Right ventricle myocardium superior (tissue), 1 donor: ENCODE measurements at regions of chr5 and their contacts with region 1.

Region 1: DNA sequence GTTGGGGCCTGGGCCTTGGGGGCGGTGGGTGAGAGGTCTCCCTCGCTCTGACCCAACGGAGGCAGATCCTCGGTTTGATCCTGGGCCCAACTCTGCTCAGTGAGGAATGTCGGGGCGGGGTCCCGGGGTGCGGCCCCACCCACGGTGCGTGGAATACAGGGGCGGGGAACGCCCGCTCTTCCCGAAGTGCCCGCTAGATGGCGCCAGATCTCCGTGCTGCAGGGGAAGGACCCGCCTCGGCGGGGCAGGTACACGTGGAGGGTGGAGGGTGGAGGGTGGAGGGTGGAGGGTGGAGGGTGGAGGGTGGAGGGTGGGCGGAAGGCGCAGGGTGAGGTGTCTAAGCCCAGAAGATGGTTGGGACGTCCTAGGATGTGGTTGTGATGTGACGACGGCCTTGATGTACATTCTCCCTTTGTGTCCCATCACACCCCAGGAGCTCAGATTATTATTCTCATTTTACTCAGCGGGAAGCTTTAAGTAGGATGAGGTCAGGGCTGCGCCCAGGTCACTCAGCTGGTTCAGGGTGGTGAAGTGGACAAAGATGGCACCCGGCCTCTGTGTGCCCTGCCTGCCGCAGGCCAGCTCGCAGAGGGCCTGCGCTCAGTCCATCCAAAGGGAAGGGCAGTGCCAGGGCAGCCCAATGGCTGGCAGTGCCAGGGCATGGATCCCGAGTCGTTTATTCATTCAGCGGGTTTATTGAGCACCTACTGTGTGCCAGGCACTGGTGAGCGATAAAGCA is 9.4 kb upstream of the RPS14 start:
- DNase-seq: peak; percentile 87
- ATAC-seq: peak; percentile 98

Region 2: GRCh38 chr5:150523472-150524350 is 64.7 kb after region 1 on chr5:
- intact Hi-C with region 1: loop called (anchors 5 kb)
- DNase-seq: no peak
- ATAC-seq: peak; percentile 55

Region 3: GRCh38 chr5:150544611-150545219 is 85.7 kb after region 1 on chr5:
- intact Hi-C with region 1: loop called (anchors 2 kb)
- DNase-seq: peak; percentile 85
- ATAC-seq: peak; percentile 82